Activated CD4-positive, alpha-beta memory T cell treated with anti-CD3 and anti-CD28 coated beads for 36 hours (primary cell): ENCODE measurements at regions of chr4 and their contacts with region 1.

Region 1: DNA sequence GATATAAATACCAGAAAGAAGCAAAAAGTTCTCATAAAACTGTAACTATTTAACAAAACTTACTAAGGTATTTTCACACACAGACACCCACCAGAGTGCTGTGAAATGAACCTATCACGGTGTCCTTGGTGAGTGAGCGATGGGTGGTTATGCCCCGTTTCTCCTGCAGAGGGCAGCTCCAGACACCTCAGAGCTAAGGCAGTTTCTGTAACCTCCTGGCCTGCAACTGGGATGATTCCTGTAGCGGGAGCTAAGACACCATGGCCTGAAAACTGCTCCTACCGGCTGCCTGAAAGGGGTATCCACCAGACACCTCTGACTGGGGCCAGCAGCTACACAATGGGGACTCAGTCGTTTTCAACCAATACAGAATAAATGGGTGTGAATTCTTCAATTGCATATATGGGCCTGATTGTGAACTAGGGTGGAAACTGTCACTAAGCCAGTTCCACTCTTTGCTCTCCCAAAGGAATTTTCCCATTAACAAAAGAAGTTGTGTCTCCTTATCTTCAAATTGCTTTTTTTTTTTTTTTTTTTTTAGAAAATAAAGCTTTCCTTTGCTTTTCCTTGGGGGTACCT is 2375.8 kb upstream of the TENM3 start:
- DNase-seq: peak; percentile 18
- H3K4me3 Mint-ChIP-seq: no peak overlapping the region
- H3K27ac Mint-ChIP-seq: no peak overlapping the region
- H3K4me1 Mint-ChIP-seq: no peaks in the 10 kb centered on the region
- H3K27me3 Mint-ChIP-seq: no peaks in the 10 kb centered on the region

Region 2: GRCh38 chr4:179919587-179919986 is 52.2 kb after region 1 on chr4:
- CTCF ChIA-PET with region 1: no interaction called
- POLR2A ChIA-PET with region 1: no interaction called
- intact Hi-C with region 1: no loop called
- DNase-seq: no peak
- H3K4me3 Mint-ChIP-seq: no peak overlapping the region
- H3K27ac Mint-ChIP-seq: no peak overlapping the region
- H3K4me1 Mint-ChIP-seq: no peaks in the 10 kb centered on the region
- H3K27me3 Mint-ChIP-seq: no peaks in the 10 kb centered on the region

Region 3: DNA sequence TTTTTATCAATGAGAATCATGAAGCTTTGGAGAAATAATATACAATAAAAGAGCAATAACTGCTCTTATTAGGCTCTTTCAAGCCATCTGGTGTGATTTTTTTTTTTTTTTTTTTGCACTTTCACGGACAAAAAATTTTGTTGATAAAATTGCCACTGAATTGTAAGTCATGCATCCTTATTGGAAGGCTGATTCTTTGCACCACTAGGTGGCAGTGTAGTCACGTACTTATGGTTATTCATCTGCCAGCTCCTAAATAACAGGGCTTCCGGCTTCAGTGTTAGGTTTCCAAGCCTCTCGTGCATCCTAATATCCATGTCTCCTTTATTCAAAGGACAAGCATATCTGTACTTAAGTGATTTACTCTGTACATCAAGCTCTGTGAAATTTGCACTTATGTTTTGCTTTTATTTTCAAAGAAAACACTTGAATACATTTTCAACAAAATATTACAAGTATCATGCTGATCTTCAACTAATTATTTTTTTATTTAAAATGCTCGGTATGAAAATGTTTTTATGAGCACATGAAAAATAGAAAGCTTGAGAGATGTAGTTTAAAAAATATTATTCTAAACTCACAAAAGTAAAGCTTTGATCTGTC is 797.5 kb after region 1 on chr4:
- CTCF ChIA-PET with region 1: no interaction called
- POLR2A ChIA-PET with region 1: no interaction called
- intact Hi-C with region 1: loop called (anchors 5 kb)
- DNase-seq: peak; percentile 41
- H3K4me3 Mint-ChIP-seq: no peak overlapping the region
- H3K27ac Mint-ChIP-seq: no peak overlapping the region
- H3K4me1 Mint-ChIP-seq: no peaks in the 10 kb centered on the region
- H3K27me3 Mint-ChIP-seq: no peaks in the 10 kb centered on the region